Left cardiac atrium (tissue), 4 donors: ENCODE measurements at regions of chr9 and their contacts with region 1.

Region 1: DNA sequence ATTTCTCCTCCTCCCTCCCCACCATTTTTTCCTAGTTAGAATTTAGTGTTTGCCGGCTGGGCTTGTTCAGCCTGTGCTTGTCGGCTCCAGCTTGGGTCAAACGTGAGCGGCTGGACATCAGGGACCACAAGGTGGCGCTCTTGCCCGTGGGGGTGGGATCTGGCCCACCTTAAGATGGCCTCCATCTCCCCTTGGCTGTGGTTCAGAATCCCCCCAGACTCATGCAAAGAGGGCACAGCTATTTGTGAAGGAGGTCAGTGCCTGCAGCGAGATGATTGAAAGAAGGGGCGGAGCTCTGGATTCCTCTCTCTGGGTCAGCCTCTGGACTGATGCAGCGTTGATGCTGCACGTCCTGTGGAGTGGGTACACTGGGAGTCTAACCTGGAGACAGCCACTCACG is 283.3 kb upstream of the TUT7 start:
- DNase-seq: peak; percentile 31
- ATAC-seq: peak; percentile 76 to 80

Region 2: GRCh38 chr9:86695910-86696424 is 58.5 kb after region 1 on chr9:
- intact Hi-C with region 1: loop called in 1 of 2 experiments (anchors 10 kb)
- DNase-seq: no peak
- ATAC-seq: no peak

Region 3: GRCh38 chr9:86741311-86742208 is 104.0 kb after region 1 on chr9:
- intact Hi-C with region 1: loop called in 1 of 2 experiments (anchors 5 kb)
- DNase-seq: peak; percentile 42
- ATAC-seq: peak; percentile 90 to 95

Region 4: GRCh38 chr9:86948074-86948929 is 310.8 kb after region 1 on chr9:
- intact Hi-C with region 1: loop called in 1 of 2 experiments (anchors 10 kb)
- DNase-seq: peak; percentile 84
- ATAC-seq: peak; percentile 54 to 73

Region 5: GRCh38 chr9:86968258-86968920 is 330.9 kb after region 1 on chr9:
- intact Hi-C with region 1: no loop called
- DNase-seq: peak; percentile 67
- ATAC-seq: peak; percentile 23 to 54